Heart right ventricle (tissue), 16 donors: ENCODE measurements at regions of chr2 and their contacts with region 1.

Region 1: GRCh38 chr2:32356735-32357644 is at the start of gene BIRC6:
- DNase-seq: peak; percentile 98 to 99
- ATAC-seq: peak; percentile 96 to 98 (median 97)
- H3K4me3 ChIP-seq: peak within 1 kb of the TSS; percentile 76 to 99 (median 92)
- H3K27ac ChIP-seq: peak within 1 kb of the TSS; percentile 85 to 98 (median 96)
- H3K4me1 ChIP-seq: peaks cover 3 to 41% (median 31%) of the 10 kb centered on the region in 9 donors
- H3K27me3 ChIP-seq: no peaks in the 10 kb centered on the region
- CTCF ChIP-seq: peak in 1 of 9 donors; percentile 20
- total RNA-seq, gene BIRC6: 36.2 to 64.0 (median 49.6) TPM

Region 2: DNA sequence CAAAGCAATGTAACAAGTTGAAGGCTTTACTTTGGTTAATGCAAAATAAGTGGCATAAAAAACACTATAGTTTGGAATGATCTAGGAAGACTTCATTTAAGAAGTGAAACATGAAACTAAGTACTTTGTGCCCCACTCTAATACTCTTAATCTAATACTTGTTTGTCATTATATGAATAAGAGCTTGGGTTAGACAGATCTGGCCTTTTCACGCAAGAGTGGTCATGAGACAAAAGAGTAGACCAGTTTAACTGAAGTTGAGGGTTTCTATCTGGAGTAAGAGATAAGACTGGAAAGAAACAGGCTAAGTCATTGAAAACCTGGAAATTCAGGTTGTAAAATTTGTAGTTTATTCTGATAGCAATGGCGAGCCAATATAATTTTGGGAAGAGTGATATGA is 188.5 kb before region 1 on chr2:
- intact Hi-C with region 1: loop called in 1 of 10 experiments (anchors 10 kb)
- DNase-seq: no peak
- ATAC-seq: no peak
- H3K4me3 ChIP-seq: no peak overlapping the region
- H3K27ac ChIP-seq: no peak overlapping the region
- H3K4me1 ChIP-seq: peaks cover 0 to 26% (median 17%) of the 10 kb centered on the region in 9 donors
- H3K27me3 ChIP-seq: no peaks in the 10 kb centered on the region
- CTCF ChIP-seq: no peak

Region 3: DNA sequence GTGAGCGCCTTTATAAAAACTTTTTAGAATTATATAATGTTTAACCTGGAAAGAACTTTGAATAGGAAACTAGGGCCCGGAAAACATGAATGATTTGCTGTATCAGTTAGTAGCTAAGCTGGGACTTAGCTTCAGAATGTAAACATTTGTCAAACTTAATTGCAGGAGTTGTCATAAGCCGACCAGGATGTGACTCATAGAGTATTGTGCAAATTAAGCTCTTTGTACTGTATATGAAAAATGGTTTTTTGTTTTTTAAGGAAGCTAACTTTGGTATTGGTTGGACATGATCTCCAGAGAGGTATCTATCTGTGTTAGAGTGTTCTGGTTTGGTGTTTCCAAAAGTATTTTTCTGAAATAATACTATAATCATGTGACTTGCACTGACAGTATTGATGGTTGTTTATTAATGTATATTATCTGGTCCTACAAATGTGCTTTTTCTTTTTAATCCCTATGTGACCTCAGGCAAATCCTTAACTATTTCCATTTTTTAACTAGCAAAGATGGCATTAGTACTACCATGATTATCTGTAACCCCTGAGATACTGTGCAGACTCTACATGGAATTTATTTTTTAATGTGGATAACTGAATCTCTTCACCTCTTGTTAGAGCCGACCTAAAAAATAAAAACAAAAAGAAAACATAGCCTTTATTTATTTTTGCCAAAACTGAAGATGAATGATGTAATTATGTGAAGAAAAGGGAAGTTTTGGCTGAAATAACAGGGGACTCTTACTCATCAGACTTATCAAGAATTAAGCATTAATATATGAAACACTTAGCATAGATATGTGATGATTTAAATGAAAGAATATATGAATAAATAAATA is 67.6 kb before region 1 on chr2:
- intact Hi-C with region 1: loop called in 1 of 10 experiments (anchors 10 kb)
- DNase-seq: no peak
- ATAC-seq: peak in 3 of 8 donors; percentile 19 to 29 (median 27)
- H3K4me3 ChIP-seq: no peak overlapping the region
- H3K27ac ChIP-seq: peak overlapping the region in 4 of 10 donors; percentile 2 to 82 (median 35)
- H3K4me1 ChIP-seq: peaks cover 5 to 75% (median 41%) of the 10 kb centered on the region in 9 donors
- H3K27me3 ChIP-seq: no peaks in the 10 kb centered on the region
- CTCF ChIP-seq: no peak

Region 4: DNA sequence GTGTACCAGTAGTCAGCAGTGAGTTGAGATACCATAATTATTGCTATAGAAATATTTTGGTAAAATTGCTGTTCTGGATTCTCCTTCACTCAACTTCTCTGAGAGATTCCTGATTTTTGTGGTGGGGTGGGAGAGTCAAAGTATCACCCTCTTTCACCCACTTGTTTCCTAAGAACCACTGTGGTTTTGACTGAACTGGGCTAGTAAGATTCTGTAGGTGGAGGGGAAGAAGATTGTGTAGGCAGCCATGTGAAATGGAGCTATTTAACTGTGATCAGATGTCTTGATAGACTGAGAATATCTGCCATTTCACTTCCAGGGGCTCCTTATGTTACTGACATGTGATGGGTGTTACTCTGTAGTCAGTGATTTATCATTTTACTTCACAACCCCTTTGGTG is 45.1 kb after region 1 on chr2:
- intact Hi-C with region 1: no loop called
- DNase-seq: no peak
- ATAC-seq: no peak
- H3K4me3 ChIP-seq: no peak overlapping the region
- H3K27ac ChIP-seq: no peak overlapping the region
- H3K4me1 ChIP-seq: no peaks in the 10 kb centered on the region
- H3K27me3 ChIP-seq: no peaks in the 10 kb centered on the region
- CTCF ChIP-seq: no peak